Upper lobe of right lung (tissue), 1 donor: ENCODE measurements at regions of chr17 and their contacts with region 1.

Region 1: DNA sequence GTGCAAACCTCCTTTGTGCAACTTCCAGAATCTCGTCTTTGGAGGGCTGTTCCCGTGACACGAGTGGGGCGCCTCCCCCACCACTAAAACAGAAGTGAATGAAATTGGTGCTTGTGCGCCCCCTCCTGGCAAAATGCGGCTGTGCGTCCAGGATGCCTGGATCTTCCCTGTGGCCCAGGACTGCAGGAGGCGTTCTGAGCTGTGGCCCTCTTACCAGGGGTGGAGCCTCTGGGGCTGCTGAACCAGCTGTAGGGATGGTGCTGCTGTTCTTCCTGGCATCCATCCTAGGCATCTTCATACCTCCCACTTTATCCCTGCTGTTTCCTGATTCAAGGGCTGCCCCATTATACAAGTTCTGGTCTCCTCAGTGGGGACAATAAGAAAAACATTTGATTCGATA is 18.5 kb upstream of the NAGLU start:
- DNase-seq: peak; percentile 92
- ATAC-seq: peak; percentile 87
- H3K4me3 ChIP-seq: no peak overlapping the region
- H3K27ac ChIP-seq: peak overlapping the region; percentile 81
- H3K4me1 ChIP-seq: peaks cover 65% of the 10 kb centered on the region
- H3K27me3 ChIP-seq: no peaks in the 10 kb centered on the region
- CTCF ChIP-seq: peak; percentile 95

Region 2: DNA sequence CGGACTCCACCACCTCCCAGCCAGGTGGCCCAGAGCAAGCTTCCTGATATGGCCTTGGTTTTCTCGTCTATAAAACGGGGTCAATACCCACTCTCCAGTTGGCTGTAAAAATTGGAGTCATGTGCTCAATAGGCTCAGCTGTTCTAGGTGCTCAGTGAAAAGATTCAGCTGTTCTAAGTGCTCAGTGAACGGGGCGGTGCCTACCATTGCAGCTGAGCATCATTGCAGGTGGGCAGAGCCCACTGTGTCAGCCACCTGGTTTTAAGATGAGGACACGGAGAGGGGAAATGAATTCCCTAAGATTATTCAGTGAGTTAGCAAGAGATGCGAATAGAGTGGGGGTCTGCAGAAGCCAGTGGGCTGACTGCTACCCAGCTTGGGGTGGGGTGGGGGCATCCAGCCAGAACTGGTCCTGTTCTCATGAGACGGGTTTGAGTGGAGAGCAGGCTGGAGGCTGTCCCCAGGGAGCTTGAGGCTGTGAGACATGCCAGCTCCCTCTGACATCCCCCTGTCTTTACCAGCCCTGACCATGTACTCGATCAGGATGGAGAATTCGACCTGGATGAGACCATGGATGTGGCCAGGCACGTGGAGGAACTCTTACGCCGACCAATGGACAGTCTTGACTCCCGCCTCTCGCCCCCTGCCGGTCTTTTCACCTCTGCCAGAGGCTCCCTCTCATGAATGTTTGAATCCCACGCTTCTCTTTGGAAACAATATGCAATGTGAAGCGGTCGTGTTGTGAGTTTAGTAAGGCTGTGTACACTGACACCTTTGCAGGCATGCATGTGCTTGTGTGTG is 207.3 kb before region 1 on chr17:
- intact Hi-C with region 1: loop called (anchors 10 kb)
- DNase-seq: no peak
- ATAC-seq: no peak
- H3K4me3 ChIP-seq: no peak overlapping the region
- H3K27ac ChIP-seq: no peak overlapping the region
- H3K4me1 ChIP-seq: peaks cover 28% of the 10 kb centered on the region
- H3K27me3 ChIP-seq: no peaks in the 10 kb centered on the region
- CTCF ChIP-seq: no peak

Region 3: GRCh38 chr17:42403150-42403549 is 114.4 kb before region 1 on chr17:
- intact Hi-C with region 1: no loop called
- DNase-seq: no peak
- ATAC-seq: no peak
- H3K4me3 ChIP-seq: no peak overlapping the region
- H3K27ac ChIP-seq: no peak overlapping the region
- H3K4me1 ChIP-seq: peaks cover 38% of the 10 kb centered on the region
- H3K27me3 ChIP-seq: no peaks in the 10 kb centered on the region
- CTCF ChIP-seq: peak; percentile 8

Region 4: DNA sequence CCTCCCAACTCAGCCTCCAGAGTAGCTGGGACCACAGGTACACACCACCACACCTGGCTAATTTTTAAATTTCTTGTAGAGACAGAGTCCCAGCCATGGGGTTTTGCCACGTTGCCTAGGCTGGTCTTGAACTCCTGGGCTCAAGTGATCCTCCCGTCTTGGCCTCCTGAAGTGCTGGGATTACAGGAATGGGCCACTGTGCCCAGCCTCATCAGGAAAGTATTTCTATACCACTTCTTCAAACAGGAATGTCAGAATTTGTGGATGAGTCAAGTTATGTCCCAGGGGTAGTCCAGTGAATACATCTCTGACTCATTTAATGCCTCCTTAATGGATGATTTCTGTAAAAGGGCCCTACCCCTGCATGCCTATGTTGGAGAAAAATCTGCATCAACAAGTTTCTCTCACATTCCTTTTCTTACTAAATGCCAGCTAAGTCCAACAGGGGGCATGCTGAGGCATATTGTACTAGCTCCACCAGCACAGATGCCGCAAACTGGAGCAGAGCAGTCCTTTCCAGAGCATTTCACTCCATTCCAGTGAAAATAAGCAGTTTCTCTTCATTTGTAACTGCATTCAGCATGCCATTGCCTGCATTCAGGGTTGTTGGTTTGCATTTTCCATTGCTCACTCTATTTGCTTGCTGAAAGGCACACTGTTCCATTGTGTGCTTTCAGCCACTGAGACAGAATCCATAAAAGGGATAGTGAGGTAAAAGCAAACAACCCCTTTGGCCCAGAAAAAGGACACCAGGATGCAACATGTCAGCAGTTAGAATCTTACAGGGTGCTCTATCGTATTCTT is 89.2 kb before region 1 on chr17:
- intact Hi-C with region 1: loop called (anchors 5 kb)
- DNase-seq: no peak
- ATAC-seq: peak; percentile 92
- H3K4me3 ChIP-seq: no peak overlapping the region
- H3K27ac ChIP-seq: peak overlapping the region; percentile 37
- H3K4me1 ChIP-seq: peaks cover 20% of the 10 kb centered on the region
- H3K27me3 ChIP-seq: no peaks in the 10 kb centered on the region
- CTCF ChIP-seq: peak; percentile 78